Activated naive CD8-positive, alpha-beta T cell treated with anti-CD3 and anti-CD28 coated beads, Interleukin-2, amount 10 ng/mL, durations not matched to agents 7 days and 5 days (primary cell): ENCODE measurements at regions of chr19 and their contacts with region 1.

Region 1: GRCh38 chr19:7522072-7522922 is at the start of gene MCOLN1:
- DNase-seq: peak; percentile 100
- ATAC-seq: peak; percentile 90
- H3K4me3 Mint-ChIP-seq: peak within 1 kb of the TSS; percentile 69
- H3K27ac Mint-ChIP-seq: peak within 1 kb of the TSS; percentile 81
- H3K4me1 Mint-ChIP-seq: peaks cover 6% of the 10 kb centered on the region
- H3K27me3 Mint-ChIP-seq: peaks cover 2% of the 10 kb centered on the region
- total RNA-seq, gene MCOLN1: 17.5 to 18.2 TPM

Region 2: GRCh38 chr19:7535035-7535992 is 13.0 kb after region 1 on chr19 and contains the start of gene PNPLA6:
- POLR2A ChIA-PET with region 1: interaction called, 26 read pairs
- DNase-seq: peak; percentile 96
- ATAC-seq: peak; percentile 78
- H3K4me3 Mint-ChIP-seq: peak within 1 kb of the TSS; percentile 96
- H3K27ac Mint-ChIP-seq: peak within 1 kb of the TSS; percentile 92
- H3K4me1 Mint-ChIP-seq: peaks cover 12% of the 10 kb centered on the region
- H3K27me3 Mint-ChIP-seq: no peaks in the 10 kb centered on the region
- total RNA-seq, gene PNPLA6: 152 to 155 TPM

Region 3: GRCh38 chr19:7590261-7590660 is 68.0 kb after region 1 on chr19:
- POLR2A ChIA-PET with region 1: no interaction called
- DNase-seq: no peak
- ATAC-seq: no peak
- H3K4me3 Mint-ChIP-seq: no peak overlapping the region
- H3K27ac Mint-ChIP-seq: no peak overlapping the region
- H3K4me1 Mint-ChIP-seq: peaks cover 2% of the 10 kb centered on the region
- H3K27me3 Mint-ChIP-seq: peaks cover 19% of the 10 kb centered on the region

Region 4: DNA sequence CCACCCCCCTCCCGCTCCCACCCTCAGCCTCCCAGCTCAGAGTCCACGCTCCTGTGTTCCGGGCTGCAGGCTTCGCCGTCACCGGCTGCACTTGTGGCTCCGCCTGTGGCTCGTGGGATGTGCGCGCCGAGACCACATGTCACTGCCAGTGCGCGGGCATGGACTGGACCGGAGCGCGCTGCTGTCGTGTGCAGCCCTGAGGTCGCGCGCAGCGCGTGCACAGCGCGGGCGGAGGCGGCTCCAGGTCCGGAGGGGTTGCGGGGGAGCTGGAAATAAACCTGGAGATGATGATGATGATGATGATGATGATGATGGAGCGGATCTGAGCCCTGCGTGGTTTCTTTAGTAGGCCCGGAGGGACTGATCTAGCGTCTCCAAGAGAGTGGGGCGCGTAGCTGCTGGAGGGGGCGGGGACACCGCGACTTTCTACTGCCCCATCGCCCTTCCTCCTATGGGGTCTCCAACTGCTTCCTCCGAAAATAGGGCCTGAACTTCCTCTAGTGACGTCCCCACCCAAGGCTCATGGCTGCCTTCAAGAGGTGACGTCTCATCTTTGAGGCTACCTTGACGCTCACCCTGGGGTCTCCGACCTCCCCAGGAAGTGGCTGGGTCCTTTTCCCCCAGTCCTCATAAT is 148.0 kb after region 1 on chr19:
- POLR2A ChIA-PET with region 1: no interaction called
- DNase-seq: peak; percentile 75
- ATAC-seq: peak; percentile 81
- H3K4me3 Mint-ChIP-seq: peak overlapping the region; percentile 79
- H3K27ac Mint-ChIP-seq: peak overlapping the region; percentile 86
- H3K4me1 Mint-ChIP-seq: peaks cover 24% of the 10 kb centered on the region
- H3K27me3 Mint-ChIP-seq: peaks cover 22% of the 10 kb centered on the region